SK-N-SH (cell line): ENCODE measurements at regions of chr1 and their contacts with region 1.

Region 1: DNA sequence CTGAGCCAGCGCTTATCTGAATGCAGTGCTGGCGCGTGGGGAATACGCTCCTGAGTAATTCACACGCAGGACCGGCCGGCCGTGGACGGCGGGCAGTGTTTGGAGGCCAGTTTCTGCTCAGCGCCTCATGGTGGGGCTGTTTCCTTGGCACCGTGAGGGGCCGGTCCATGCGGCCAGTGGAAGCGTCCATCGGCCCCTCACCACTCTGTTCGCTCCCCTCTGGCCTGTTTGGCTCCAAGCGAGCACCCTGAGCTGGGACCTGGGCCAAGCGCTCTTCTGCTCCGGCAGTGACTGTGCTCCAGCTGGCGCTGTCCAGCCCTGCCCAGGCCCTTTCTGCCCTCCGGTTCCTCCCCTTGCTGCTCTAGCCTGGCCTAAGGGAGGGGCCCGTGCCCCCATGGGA is 16.3 kb upstream of the PLCH2 start:
- DNase-seq: peak; percentile 97
- H3K4me3 ChIP-seq: no peak overlapping the region
- H3K27ac ChIP-seq: peak overlapping the region in 1 of 2 experiments; percentile 58; a peak in 1 of 4 replicates
- H3K4me1 ChIP-seq: peaks cover 0 to 16% of the 10 kb centered on the region in 2 experiments; a peak in 1 of 4 replicates
- H3K27me3 ChIP-seq: no peaks in the 10 kb centered on the region
- CTCF ChIP-seq: peak; percentile 45
- EP300 ChIP-seq: no peak
- RAD21 ChIP-seq: peak; percentile 94

Region 2: DNA sequence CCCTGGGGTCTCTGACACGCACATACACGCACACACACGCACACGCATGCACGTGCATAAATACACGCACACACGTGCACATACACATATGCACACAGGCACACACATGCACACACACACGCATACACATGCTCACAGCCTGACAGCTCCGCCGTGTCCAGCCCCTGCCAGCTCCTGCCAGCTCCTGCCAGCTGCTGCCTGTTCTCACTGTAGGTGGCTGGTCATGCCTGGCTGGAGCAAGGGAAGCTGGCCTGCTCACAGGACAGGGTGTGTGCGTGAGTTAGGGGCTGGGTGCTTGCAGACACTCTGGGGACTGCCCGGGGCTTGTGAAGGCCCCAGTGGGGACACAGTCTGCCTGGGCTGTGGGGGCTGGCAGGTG is 21.2 kb after region 1 on chr1:
- CTCF ChIA-PET with region 1: interaction called, 15 read pairs
- POLR2A ChIA-PET with region 1: interaction called, 3 read pairs
- DNase-seq: peak; percentile 88
- H3K4me3 ChIP-seq: no peak overlapping the region
- H3K27ac ChIP-seq: peak overlapping the region in 1 of 2 experiments; percentile 96; a peak in 2 of 4 replicates
- H3K4me1 ChIP-seq: peaks cover 0 to 76% of the 10 kb centered on the region in 2 experiments; a peak in 1 of 4 replicates
- H3K27me3 ChIP-seq: no peaks in the 10 kb centered on the region
- CTCF ChIP-seq: no peak
- EP300 ChIP-seq: 0 out of 4 replicates have a peak, but pooled peaks of 1 of the 2 experiments have one; percentile 15
- RAD21 ChIP-seq: no peak

Region 3: GRCh38 chr1:2525920-2526823 is 66.4 kb after region 1 on chr1 and contains the start of gene PANK4:
- CTCF ChIA-PET with region 1: interaction called, 10 read pairs
- POLR2A ChIA-PET with region 1: no interaction called
- DNase-seq: peak; percentile 96
- H3K4me3 ChIP-seq: peak within 1 kb of the TSS; percentile 70 to 93
- H3K27ac ChIP-seq: peak within 1 kb of the TSS; percentile 24 to 87; a peak in 3 of 4 replicates
- H3K4me1 ChIP-seq: peaks cover 0 to 45% of the 10 kb centered on the region in 2 experiments; a peak in 3 of 4 replicates
- H3K27me3 ChIP-seq: peaks cover 6% of the 10 kb centered on the region; the same call in 1 of the 2 replicates
- CTCF ChIP-seq: no peak
- EP300 ChIP-seq: no peak
- RAD21 ChIP-seq: no peak
- polyA plus RNA-seq, gene PANK4: 15.1 and 16.6 TPM in 2 replicates

Region 4: DNA sequence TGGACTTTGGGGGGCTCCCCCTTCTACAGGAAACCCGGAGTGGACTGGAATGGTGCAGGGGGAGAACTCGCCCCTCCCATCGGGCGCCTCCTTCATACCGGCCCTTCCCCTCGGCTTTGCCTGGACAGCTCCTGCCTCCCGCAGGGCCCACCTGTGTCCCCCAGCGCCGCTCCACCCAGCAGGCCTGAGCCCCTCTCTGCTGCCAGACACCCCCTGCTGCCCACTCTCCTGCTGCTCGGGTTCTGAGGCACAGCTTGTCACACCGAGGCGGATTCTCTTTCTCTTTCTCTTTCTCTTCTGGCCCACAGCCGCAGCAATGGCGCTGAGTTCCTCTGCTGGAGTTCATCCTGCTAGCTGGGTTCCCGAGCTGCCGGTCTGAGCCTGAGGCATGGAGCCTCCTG is 96.5 kb after region 1 on chr1 and contains the start of gene TNFRSF14:
- CTCF ChIA-PET with region 1: interaction called, 13 read pairs
- POLR2A ChIA-PET with region 1: no interaction called
- DNase-seq: no peak
- H3K4me3 ChIP-seq: no peak within 1 kb of the TSS
- H3K27ac ChIP-seq: no peak within 1 kb of the TSS
- H3K4me1 ChIP-seq: peaks cover 0 to 4% of the 10 kb centered on the region in 2 experiments; a peak in 1 of 4 replicates
- H3K27me3 ChIP-seq: no peaks in the 10 kb centered on the region
- CTCF ChIP-seq: no peak
- EP300 ChIP-seq: no peak
- RAD21 ChIP-seq: no peak
- polyA plus RNA-seq, gene TNFRSF14: 0.19 and 0.28 TPM in 2 replicates